ENCODE measurements at regions of chr14 and their contacts with region 1.

Region 1: GRCh38 chr14:99524804-99525698 is 43.8 kb downstream of the CCNK start:
- DNase-seq: no peak
- H3K4me3 ChIP-seq: no peak overlapping the region
- CTCF ChIP-seq: peak; percentile 62

Region 2: GRCh38 chr14:99581938-99582337 is 56.9 kb after region 1 on chr14:
- CTCF ChIA-PET with region 1: no interaction called
- POLR2A ChIA-PET with region 1: no interaction called
- DNase-seq: no peak
- H3K4me3 ChIP-seq: no peak overlapping the region
- CTCF ChIP-seq: no peak

Region 3: GRCh38 chr14:99604283-99604765 is 79.3 kb after region 1 on chr14:
- CTCF ChIA-PET with region 1: interaction called, 14 read pairs
- POLR2A ChIA-PET with region 1: interaction called, 3 read pairs
- DNase-seq: no peak
- H3K4me3 ChIP-seq: peak overlapping the region; percentile 67
- CTCF ChIP-seq: no peak

Region 4: GRCh38 chr14:99609245-99610117 is 84.4 kb after region 1 on chr14:
- CTCF ChIA-PET with region 1: interaction called, 11 read pairs
- POLR2A ChIA-PET with region 1: interaction called, 3 read pairs
- DNase-seq: no peak
- H3K4me3 ChIP-seq: no peak overlapping the region
- CTCF ChIP-seq: peak; percentile 56

Region 5: GRCh38 chr14:99619835-99620834 is 95.1 kb after region 1 on chr14:
- CTCF ChIA-PET with region 1: interaction called, 174 read pairs
- POLR2A ChIA-PET with region 1: interaction called, 4 read pairs
- DNase-seq: no peak
- H3K4me3 ChIP-seq: no peak overlapping the region
- CTCF ChIP-seq: no peak

Region 6: DNA sequence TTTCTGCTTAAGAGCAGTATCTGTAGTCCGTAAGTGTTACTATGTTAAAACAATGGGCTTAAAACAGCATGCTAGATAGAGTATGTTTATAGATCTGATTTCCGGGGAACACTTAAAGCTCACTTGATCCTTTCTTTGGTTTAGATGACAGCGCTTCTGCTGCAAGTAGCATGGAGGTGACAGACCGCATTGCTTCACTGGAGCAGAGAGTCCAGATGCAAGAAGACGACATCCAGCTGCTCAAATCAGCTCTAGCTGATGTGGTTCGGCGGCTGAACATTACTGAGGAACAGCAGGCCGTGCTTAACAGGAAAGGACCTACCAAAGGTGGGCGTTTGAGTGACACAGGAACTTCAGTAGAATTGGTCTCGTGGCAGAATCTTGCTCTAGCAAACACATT is 325.7 kb after region 1 on chr14:
- CTCF ChIA-PET with region 1: no interaction called
- POLR2A ChIA-PET with region 1: no interaction called
- DNase-seq: no peak
- H3K4me3 ChIP-seq: no peak overlapping the region
- CTCF ChIP-seq: no peak

Region 7: DNA sequence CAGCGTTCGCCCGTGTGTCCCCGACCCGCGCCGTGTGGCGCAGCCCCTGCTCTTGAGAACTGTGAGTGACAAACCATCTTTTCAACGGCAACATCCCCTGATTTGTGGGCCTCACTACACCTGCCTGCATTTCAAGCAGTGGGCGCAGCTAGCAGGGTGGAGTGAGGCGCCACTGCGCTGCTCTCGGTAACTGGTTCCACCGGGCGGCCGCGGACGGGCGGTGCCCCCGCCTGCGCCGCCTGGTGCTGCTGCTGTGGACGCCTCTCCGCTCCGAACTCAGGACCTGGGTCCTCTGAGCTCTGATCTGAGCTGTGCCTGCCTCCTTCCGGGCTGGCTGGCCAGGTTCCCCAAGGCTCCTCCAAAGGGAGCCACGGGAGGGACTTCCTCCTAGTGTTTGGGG is 640.3 kb after region 1 on chr14:
- CTCF ChIA-PET with region 1: no interaction called
- POLR2A ChIA-PET with region 1: no interaction called
- DNase-seq: no peak
- H3K4me3 ChIP-seq: no peak overlapping the region
- CTCF ChIP-seq: no peak

Measured in AG04449 (cell line).